GM12878 (cell line): ENCODE measurements at regions of chr16 and their contacts with region 1.

Region 1: DNA sequence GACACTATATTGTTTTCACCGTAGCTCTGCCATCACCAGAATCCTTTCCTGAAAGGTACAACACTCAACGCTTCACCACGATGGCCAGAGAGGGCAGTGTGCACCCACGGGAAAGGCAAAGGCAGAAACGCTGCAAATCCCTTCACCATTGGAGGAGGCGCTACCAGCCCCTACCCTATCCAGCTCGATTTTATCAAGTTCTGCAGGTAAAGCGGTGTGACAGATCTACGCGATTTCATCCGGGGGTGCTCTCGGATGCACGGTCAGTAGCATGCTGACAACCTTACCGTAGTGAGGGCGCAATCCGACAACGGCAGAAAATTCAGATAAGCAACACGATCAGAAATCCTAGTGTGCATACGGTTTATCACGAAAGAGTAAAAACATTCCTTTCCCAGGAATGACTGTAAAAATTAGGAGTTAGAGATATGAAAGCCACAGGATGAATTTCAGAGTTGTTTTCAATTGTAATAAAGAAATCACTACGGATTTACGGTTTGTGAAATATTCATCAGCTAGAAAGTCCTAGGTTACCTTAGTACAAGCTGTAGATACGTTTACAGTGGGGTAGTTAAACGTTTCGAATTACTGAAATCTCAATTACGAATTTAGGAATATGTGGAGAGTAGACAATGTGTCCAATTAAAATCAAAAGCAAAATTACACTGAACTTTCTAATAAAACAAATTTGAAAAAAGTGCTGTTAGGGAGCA is 1.8 kb downstream of the NETO2 start:
- DNase-seq: peak; percentile 86
- ATAC-seq: peak; percentile 75
- H3K4me3 ChIP-seq: peak overlapping the region; percentile 79
- H3K27ac ChIP-seq: peak overlapping the region; percentile 52
- H3K4me1 ChIP-seq: peaks cover 13% of the 10 kb centered on the region
- H3K27me3 ChIP-seq: no peaks in the 10 kb centered on the region
- CTCF ChIP-seq: peak; percentile 95 to 99 (median 99); a peak in 5 of 6 replicates
- EP300 ChIP-seq: no peak
- POLR2A ChIP-seq: peak; percentile 76
- RAD21 ChIP-seq: peak; percentile 92

Region 2: DNA sequence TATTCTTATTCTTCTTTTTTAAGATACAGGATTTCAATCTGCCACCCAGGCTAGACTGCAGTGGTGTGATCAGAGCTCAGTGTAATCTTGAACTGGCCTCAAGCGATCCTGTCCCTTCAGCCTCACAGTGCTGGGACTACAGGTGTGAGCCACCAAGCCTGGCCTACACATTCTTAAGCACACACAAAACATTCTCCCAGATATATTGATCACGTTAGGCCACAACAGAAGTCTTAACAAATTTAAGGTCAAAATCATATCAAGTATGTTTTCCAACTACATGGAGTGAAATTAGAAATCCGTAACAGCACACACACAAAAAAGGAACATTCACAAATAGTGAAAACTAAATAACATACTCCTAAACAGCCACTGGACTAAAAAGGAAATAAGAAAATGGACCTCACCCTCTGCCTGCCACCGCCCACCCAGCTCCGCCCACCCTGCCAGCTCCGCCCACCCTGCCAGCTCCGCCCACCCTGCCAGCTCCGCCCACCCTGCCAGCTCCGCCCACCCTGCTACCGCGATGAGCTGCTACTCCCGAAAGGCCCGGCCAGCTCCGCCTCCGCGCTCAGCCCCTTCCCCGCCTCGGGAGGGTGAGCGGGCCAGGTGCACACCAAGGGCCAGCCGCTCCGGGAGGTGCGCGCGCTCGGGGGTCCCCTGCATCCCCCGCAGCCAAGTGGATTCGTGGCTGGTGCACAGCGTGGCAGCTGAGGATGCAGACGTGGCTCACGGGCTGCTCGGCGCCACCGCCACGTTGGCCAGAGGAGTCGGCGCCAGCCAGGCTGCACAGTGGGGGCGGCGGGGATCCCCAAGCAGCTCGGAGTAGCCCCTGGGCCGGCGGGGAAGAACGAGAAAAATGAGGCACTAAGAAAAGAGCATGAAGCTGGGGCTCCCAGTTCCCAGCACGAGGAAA is 352.2 kb before region 1 on chr16:
- CTCF ChIA-PET with region 1: no interaction called
- POLR2A ChIA-PET with region 1: no interaction called
- RAD21 ChIA-PET with region 1: no interaction called
- SMC1A ChIA-PET with region 1: no interaction called
- in situ Hi-C with region 1: no loop called
- intact Hi-C with region 1: no loop called
- DNase-seq: peak; percentile 57
- ATAC-seq: peak; percentile 93
- H3K4me3 ChIP-seq: peak overlapping the region; percentile 73
- H3K27ac ChIP-seq: peak overlapping the region; percentile 91
- H3K4me1 ChIP-seq: peaks cover 43% of the 10 kb centered on the region
- H3K27me3 ChIP-seq: no peaks in the 10 kb centered on the region
- CTCF ChIP-seq: no peak
- EP300 ChIP-seq: no peak
- POLR2A ChIP-seq: peak; percentile 96
- RAD21 ChIP-seq: no peak

Region 3: GRCh38 chr16:47037746-47038458 is 104.0 kb before region 1 on chr16:
- CTCF ChIA-PET with region 1: interaction called, 162 read pairs
- POLR2A ChIA-PET with region 1: interaction called, 12 read pairs
- RAD21 ChIA-PET with region 1: interaction called, 127 read pairs
- SMC1A ChIA-PET with region 1: interaction called, 101 read pairs
- in situ Hi-C with region 1: loop called (anchors 5 kb)
- intact Hi-C with region 1: loop called (anchors 1 kb)
- DNase-seq: peak; percentile 40
- ATAC-seq: peak; percentile 97
- H3K4me3 ChIP-seq: peak overlapping the region; percentile 75
- H3K27ac ChIP-seq: no peak overlapping the region
- H3K4me1 ChIP-seq: peaks cover 16% of the 10 kb centered on the region
- H3K27me3 ChIP-seq: no peaks in the 10 kb centered on the region
- CTCF ChIP-seq: peak; percentile 87 to 98 (median 95)
- EP300 ChIP-seq: 0 out of 4 replicates have a peak, but pooled peaks of 1 of the 2 experiments have one; percentile 21
- POLR2A ChIP-seq: peak; percentile 73
- RAD21 ChIP-seq: peak; percentile 90

Region 4: DNA sequence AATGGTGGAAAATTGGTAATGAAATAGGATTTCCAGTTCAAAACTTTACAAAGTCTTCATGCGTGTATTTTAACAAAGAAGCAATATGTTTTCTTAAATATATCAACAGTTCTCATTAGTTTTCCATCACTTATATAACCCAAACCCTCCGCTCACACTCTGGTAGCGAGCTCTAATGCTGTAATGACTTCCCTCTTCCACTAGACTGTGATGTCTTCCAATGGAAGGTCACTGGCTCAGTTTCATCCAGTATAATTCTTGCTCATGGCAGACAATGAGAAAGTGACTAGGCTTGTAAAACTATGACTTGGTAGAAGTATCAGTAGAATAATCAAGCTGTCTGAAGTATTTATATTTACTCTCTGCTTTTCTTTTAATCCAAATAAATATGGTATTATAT is 31.0 kb before region 1 on chr16:
- CTCF ChIA-PET with region 1: interaction called, 13 read pairs
- POLR2A ChIA-PET with region 1: no interaction called
- RAD21 ChIA-PET with region 1: interaction called, 10 read pairs
- SMC1A ChIA-PET with region 1: interaction called, 9 read pairs
- in situ Hi-C with region 1: no loop called
- intact Hi-C with region 1: no loop called
- DNase-seq: no peak
- ATAC-seq: no peak
- H3K4me3 ChIP-seq: no peak overlapping the region
- H3K27ac ChIP-seq: no peak overlapping the region
- H3K4me1 ChIP-seq: no peaks in the 10 kb centered on the region; the same call in 1 of the 2 replicates
- H3K27me3 ChIP-seq: no peaks in the 10 kb centered on the region
- CTCF ChIP-seq: peak in 1 of 3 experiments; percentile 14; a peak in 1 of 6 replicates
- EP300 ChIP-seq: no peak
- POLR2A ChIP-seq: no peak
- RAD21 ChIP-seq: no peak

Region 5: DNA sequence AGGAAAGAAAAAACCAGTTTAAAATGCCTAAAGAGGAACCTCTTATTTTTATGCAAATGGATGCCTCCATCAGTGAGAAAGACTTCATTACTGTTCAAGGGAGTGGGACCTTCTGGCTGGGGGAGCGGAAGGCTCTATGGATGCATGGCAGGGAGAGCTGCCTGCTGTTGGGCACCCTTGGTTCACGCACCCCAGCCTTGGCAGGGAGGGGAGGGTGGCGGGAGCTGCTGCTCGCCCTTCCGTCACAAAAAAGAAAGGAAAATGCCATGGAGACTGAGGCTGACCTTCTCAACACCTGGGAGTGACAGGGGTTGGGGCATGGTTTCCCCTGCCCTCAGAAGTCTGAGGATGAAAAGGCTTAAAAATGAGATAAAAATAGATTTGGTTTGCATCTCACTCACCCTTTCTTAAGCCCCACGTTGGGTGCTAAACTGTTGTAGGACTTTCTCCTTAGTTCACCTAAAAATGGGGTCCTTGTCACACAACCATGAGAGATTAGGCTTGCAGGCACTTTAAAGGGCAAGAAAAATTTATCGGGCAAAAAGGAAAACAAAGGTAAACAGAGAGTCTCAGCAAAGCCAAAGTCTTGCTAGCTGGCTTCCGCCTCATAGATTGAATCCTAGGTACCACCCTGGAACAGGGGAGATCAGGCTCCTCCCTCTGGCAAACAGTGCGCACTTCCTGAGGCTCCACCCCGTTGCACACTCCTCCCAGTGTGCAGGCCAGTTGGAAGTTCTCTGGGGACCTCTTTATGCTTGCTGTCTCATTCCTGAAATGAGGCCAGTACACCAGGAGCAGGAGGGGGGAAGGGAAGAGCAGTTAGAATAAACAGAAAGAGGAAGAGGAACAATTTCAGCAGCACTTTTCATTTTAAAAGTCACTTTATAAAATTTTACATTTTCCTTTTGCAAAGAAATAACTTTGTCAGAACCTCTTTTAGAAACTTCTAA is 350.8 kb after region 1 on chr16:
- CTCF ChIA-PET with region 1: interaction called, 3 read pairs
- POLR2A ChIA-PET with region 1: interaction called, 3 read pairs
- RAD21 ChIA-PET with region 1: interaction called, 12 read pairs
- SMC1A ChIA-PET with region 1: interaction called, 5 read pairs
- in situ Hi-C with region 1: no loop called
- intact Hi-C with region 1: no loop called
- DNase-seq: peak; percentile 76
- ATAC-seq: peak; percentile 95
- H3K4me3 ChIP-seq: peak overlapping the region; percentile 57
- H3K27ac ChIP-seq: peak overlapping the region; percentile 97
- H3K4me1 ChIP-seq: peaks cover 29% of the 10 kb centered on the region
- H3K27me3 ChIP-seq: no peaks in the 10 kb centered on the region
- CTCF ChIP-seq: no peak
- EP300 ChIP-seq: peak; percentile 55 to 61; a peak in 3 of 4 replicates
- POLR2A ChIP-seq: peak; percentile 58
- RAD21 ChIP-seq: no peak

Region 6: GRCh38 chr16:48117217-48118105 is 975.5 kb after region 1 on chr16:
- CTCF ChIA-PET with region 1: interaction called, 14 read pairs
- POLR2A ChIA-PET with region 1: no interaction called
- RAD21 ChIA-PET with region 1: interaction called, 5 read pairs
- SMC1A ChIA-PET with region 1: interaction called, 6 read pairs
- in situ Hi-C with region 1: no loop called
- intact Hi-C with region 1: loop called (anchors 5 kb)
- DNase-seq: no peak
- ATAC-seq: peak; percentile 98
- H3K4me3 ChIP-seq: no peak overlapping the region
- H3K27ac ChIP-seq: no peak overlapping the region
- H3K4me1 ChIP-seq: no peaks in the 10 kb centered on the region
- H3K27me3 ChIP-seq: no peaks in the 10 kb centered on the region
- CTCF ChIP-seq: peak; percentile 77 to 96 (median 95)
- EP300 ChIP-seq: no peak
- POLR2A ChIP-seq: no peak
- RAD21 ChIP-seq: peak; percentile 86